ENCODE measurements at regions of chr10 and their contacts with region 1.

Region 1: GRCh38 chr10:15652117-15652516 is 67.6 kb downstream of the ITGA8 start:
- DNase-seq: no peak
- ATAC-seq: no peak
- H3K4me3 ChIP-seq: no peak overlapping the region
- H3K27ac ChIP-seq: no peak overlapping the region
- H3K4me1 ChIP-seq: peaks cover 0 to 3% of the 10 kb centered on the region in 2 experiments; a peak in 2 of 5 replicates
- H3K27me3 ChIP-seq: peaks cover 0 to 3% of the 10 kb centered on the region in 2 experiments; a peak in 1 of 5 replicates
- CTCF ChIP-seq: no peak
- EP300 ChIP-seq: no peak
- POLR2A ChIP-seq: no peak
- RAD21 ChIP-seq: no peak

Region 2: GRCh38 chr10:15585303-15585715 is 66.8 kb before region 1 on chr10:
- CTCF ChIA-PET with region 1: no interaction called
- POLR2A ChIA-PET with region 1: no interaction called
- in situ Hi-C with region 1: no loop called
- intact Hi-C with region 1: loop called (anchors 5 kb)
- DNase-seq: peak; percentile 69 to 80 (median 71)
- ATAC-seq: peak; percentile 96
- H3K4me3 ChIP-seq: no peak overlapping the region
- H3K27ac ChIP-seq: no peak overlapping the region
- H3K4me1 ChIP-seq: peaks cover 0 to 4% of the 10 kb centered on the region in 2 experiments; a peak in 1 of 5 replicates
- H3K27me3 ChIP-seq: no peaks in the 10 kb centered on the region
- CTCF ChIP-seq: peak; percentile 80 to 96 (median 80)
- EP300 ChIP-seq: no peak
- POLR2A ChIP-seq: no peak
- RAD21 ChIP-seq: peak; percentile 83 to 92

Region 3: GRCh38 chr10:15620337-15620736 is 31.8 kb before region 1 on chr10:
- CTCF ChIA-PET with region 1: no interaction called
- POLR2A ChIA-PET with region 1: no interaction called
- in situ Hi-C with region 1: no loop called
- intact Hi-C with region 1: no loop called
- DNase-seq: no peak
- ATAC-seq: no peak
- H3K4me3 ChIP-seq: no peak overlapping the region
- H3K27ac ChIP-seq: no peak overlapping the region
- H3K4me1 ChIP-seq: no peaks in the 10 kb centered on the region; a peak in 1 of 5 replicates
- H3K27me3 ChIP-seq: no peaks in the 10 kb centered on the region
- CTCF ChIP-seq: no peak
- EP300 ChIP-seq: no peak
- POLR2A ChIP-seq: no peak
- RAD21 ChIP-seq: no peak

Region 4: DNA sequence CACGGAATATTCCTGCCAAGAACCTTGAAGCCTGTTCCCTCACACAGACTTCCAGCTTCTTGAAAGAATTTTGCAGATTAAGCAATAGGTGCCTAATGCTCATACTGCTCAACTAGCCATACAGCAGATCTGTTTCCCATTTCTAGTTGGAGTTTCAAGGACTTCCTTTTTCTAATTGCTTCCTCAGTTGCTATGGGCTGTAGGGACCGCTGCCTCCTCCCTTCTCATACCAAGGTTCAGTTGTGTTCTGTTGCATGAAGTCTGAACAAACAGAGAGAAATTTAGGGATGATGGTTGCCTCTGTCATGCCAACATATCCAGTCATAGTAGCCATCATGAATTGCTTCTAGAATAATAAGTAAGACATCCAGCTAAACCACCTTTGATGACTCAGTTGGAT is 60.8 kb after region 1 on chr10:
- CTCF ChIA-PET with region 1: no interaction called
- POLR2A ChIA-PET with region 1: no interaction called
- in situ Hi-C with region 1: no loop called
- intact Hi-C with region 1: loop called (anchors 2 kb)
- DNase-seq: no peak
- ATAC-seq: no peak
- H3K4me3 ChIP-seq: no peak overlapping the region
- H3K27ac ChIP-seq: no peak overlapping the region
- H3K4me1 ChIP-seq: no peaks in the 10 kb centered on the region
- H3K27me3 ChIP-seq: peaks cover 0 to 4% of the 10 kb centered on the region in 2 experiments; a peak in 1 of 5 replicates
- CTCF ChIP-seq: no peak
- EP300 ChIP-seq: no peak
- POLR2A ChIP-seq: no peak
- RAD21 ChIP-seq: peak in 1 of 2 experiments; percentile 4; a peak in 1 of 4 replicates